K562 (cell line): ENCODE measurements at regions of chr1 and their contacts with region 1.

Region 1: GRCh38 chr1:156705918-156706656 is 704 bp upstream of the CRABP2 start:
- DNase-seq: peak; percentile 86 to 96 (median 94)
- ATAC-seq: peak; percentile 91
- H3K4me3 ChIP-seq: peak overlapping the region; percentile 47
- H3K27ac ChIP-seq: peak overlapping the region; percentile 44; the same call in 2 of the 3 replicates
- H3K4me1 ChIP-seq: peaks cover 11 to 30% of the 10 kb centered on the region in 2 experiments; a peak in 4 of 5 replicates
- H3K27me3 ChIP-seq: no peaks in the 10 kb centered on the region
- CTCF ChIP-seq: peak; percentile 89 to 91 (median 89)
- EP300 ChIP-seq: no peak
- POLR2A ChIP-seq: no peak
- RAD21 ChIP-seq: peak; percentile 94 to 96

Region 2: DNA sequence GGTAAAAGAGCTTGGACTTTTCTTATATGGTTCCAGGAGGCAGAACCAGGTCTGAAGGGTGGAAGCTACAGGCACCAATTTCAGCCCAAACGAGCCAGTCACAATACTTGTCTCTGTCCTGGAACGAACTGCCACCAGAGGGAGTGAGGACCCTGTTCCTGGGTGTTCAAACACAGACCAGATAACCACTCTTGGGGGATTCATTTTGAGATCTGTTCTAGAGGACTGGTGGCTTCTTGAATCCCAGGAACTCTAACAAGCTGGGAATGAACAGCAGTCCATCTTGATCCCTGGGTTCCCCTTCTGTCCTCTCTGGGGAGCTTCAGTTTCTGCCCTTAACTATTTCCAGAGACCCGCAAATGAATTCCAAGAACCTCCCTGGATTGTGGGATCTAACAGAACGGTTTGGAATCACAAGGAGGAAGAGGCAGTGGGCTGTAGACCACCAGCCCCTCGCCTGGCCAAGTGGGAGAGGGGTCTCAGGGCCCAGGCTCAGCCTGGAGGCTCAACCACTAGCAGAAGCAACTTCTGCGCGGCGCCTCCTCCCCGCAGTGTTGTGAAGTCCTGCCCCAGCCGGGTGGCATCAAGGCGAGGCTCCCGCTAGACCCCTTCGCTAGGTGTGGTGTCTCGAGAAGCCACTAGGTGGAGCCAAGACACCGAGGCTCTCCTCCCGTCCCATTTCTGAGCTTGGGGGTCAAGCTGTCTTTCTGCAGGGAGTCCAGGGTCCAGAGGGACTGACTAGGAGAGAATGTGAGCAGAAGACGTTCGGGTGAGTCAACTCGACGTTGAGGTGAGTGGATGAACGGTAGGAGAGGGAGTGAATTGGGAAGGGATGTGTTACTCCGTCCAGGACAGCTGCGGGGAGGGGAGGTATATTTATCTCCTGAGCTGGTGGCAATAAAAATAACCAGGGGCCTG is 16.8 kb before region 1 on chr1:
- CTCF ChIA-PET with region 1: interaction called, 64 read pairs
- POLR2A ChIA-PET with region 1: interaction called, 14 read pairs
- in situ Hi-C with region 1: no loop called
- intact Hi-C with region 1: loop called (anchors 1 kb)
- DNase-seq: peak; percentile 87 to 90 (median 88)
- ATAC-seq: peak; percentile 81
- H3K4me3 ChIP-seq: peak overlapping the region; percentile 32
- H3K27ac ChIP-seq: peak overlapping the region; percentile 21; the same call in 2 of the 3 replicates
- H3K4me1 ChIP-seq: peaks cover 45 to 54% of the 10 kb centered on the region in 2 experiments
- H3K27me3 ChIP-seq: 0 out of 5 replicates have a peak, but pooled peaks cover 0 to 2% of the 10 kb centered on the region in 2 experiments
- CTCF ChIP-seq: peak; percentile 92 to 97 (median 97)
- EP300 ChIP-seq: 0 out of 2 replicates have a peak, but pooled peaks have one; percentile 12
- POLR2A ChIP-seq: no peak
- RAD21 ChIP-seq: peak; percentile 94 to 98

Region 3: DNA sequence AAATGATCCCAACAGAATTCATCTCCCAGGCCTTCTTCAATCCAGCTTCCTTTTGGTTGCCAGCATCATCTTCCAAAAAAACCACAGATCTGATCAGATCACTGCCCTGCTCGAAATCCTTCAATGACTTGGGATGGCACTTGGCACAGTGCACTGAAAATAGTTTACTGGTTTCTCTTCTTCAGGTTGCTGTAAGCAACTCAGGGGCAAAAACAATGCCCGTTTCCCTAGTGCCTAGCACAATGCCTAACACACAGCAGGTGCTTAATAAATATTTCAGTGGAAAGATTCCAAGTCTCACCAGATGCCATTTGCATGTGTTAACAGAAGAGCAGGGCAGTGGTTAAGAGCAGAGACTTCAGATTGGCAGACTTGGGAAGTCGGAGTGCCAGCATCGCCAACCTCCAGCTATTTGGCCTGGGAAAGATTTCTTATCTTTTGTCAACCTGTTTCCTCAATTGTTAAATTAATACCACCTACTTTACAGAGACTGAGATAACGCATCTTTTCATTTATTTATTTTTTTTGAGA is 11.3 kb after region 1 on chr1:
- CTCF ChIA-PET with region 1: no interaction called
- POLR2A ChIA-PET with region 1: interaction called, 21 read pairs
- in situ Hi-C with region 1: no loop called
- intact Hi-C with region 1: no loop called
- DNase-seq: no peak
- ATAC-seq: no peak
- H3K4me3 ChIP-seq: no peak overlapping the region
- H3K27ac ChIP-seq: no peak overlapping the region
- H3K4me1 ChIP-seq: no peaks in the 10 kb centered on the region; a peak in 1 of 5 replicates
- H3K27me3 ChIP-seq: no peaks in the 10 kb centered on the region
- CTCF ChIP-seq: no peak
- EP300 ChIP-seq: no peak
- POLR2A ChIP-seq: no peak
- RAD21 ChIP-seq: no peak

Region 4: GRCh38 chr1:156786655-156787054 is 80.6 kb after region 1 on chr1:
- CTCF ChIA-PET with region 1: no interaction called
- POLR2A ChIA-PET with region 1: no interaction called
- in situ Hi-C with region 1: no loop called
- intact Hi-C with region 1: no loop called
- DNase-seq: no peak
- ATAC-seq: no peak
- H3K4me3 ChIP-seq: no peak overlapping the region
- H3K27ac ChIP-seq: no peak overlapping the region
- H3K4me1 ChIP-seq: no peaks in the 10 kb centered on the region
- H3K27me3 ChIP-seq: no peaks in the 10 kb centered on the region
- CTCF ChIP-seq: no peak
- EP300 ChIP-seq: no peak
- POLR2A ChIP-seq: no peak
- RAD21 ChIP-seq: no peak